GM12878 (cell line): ENCODE measurements at regions of chr11 and their contacts with region 1.

Region 1: GRCh38 chr11:120511116-120511819 is at the start of gene GRIK4:
- DNase-seq: no peak
- ATAC-seq: peak; percentile 95
- H3K4me3 ChIP-seq: peak within 1 kb of the TSS; percentile 16; the same call in 1 of the 2 replicates
- H3K27ac ChIP-seq: no peak within 1 kb of the TSS
- H3K4me1 ChIP-seq: no peaks in the 10 kb centered on the region; the same call in 1 of the 2 replicates
- H3K27me3 ChIP-seq: no peaks in the 10 kb centered on the region
- CTCF ChIP-seq: peak; percentile 88 to 98 (median 92)
- EP300 ChIP-seq: no peak
- POLR2A ChIP-seq: no peak
- RAD21 ChIP-seq: peak; percentile 99
- polyA plus RNA-seq, gene GRIK4: 0.33 to 0.45 TPM

Region 2: GRCh38 chr11:120363436-120363835 is 147.8 kb before region 1 on chr11:
- CTCF ChIA-PET with region 1: no interaction called
- POLR2A ChIA-PET with region 1: no interaction called
- RAD21 ChIA-PET with region 1: no interaction called
- SMC1A ChIA-PET with region 1: no interaction called
- in situ Hi-C with region 1: no loop called
- intact Hi-C with region 1: no loop called
- DNase-seq: no peak
- ATAC-seq: no peak
- H3K4me3 ChIP-seq: no peak overlapping the region
- H3K27ac ChIP-seq: no peak overlapping the region
- H3K4me1 ChIP-seq: no peaks in the 10 kb centered on the region
- H3K27me3 ChIP-seq: no peaks in the 10 kb centered on the region
- CTCF ChIP-seq: no peak
- EP300 ChIP-seq: no peak
- POLR2A ChIP-seq: no peak
- RAD21 ChIP-seq: no peak

Region 3: GRCh38 chr11:120500414-120501071 is 10.7 kb before region 1 on chr11:
- CTCF ChIA-PET with region 1: interaction called, 16 read pairs
- POLR2A ChIA-PET with region 1: no interaction called
- RAD21 ChIA-PET with region 1: interaction called, 4 read pairs
- SMC1A ChIA-PET with region 1: interaction called, 11 read pairs
- in situ Hi-C with region 1: no loop called
- intact Hi-C with region 1: no loop called
- DNase-seq: no peak
- ATAC-seq: peak; percentile 61
- H3K4me3 ChIP-seq: no peak overlapping the region
- H3K27ac ChIP-seq: peak overlapping the region; percentile 24; the same call in 1 of the 2 replicates
- H3K4me1 ChIP-seq: peaks cover 20% of the 10 kb centered on the region
- H3K27me3 ChIP-seq: no peaks in the 10 kb centered on the region; a peak in 1 of 4 replicates
- CTCF ChIP-seq: no peak
- EP300 ChIP-seq: no peak
- POLR2A ChIP-seq: no peak
- RAD21 ChIP-seq: no peak

Region 4: DNA sequence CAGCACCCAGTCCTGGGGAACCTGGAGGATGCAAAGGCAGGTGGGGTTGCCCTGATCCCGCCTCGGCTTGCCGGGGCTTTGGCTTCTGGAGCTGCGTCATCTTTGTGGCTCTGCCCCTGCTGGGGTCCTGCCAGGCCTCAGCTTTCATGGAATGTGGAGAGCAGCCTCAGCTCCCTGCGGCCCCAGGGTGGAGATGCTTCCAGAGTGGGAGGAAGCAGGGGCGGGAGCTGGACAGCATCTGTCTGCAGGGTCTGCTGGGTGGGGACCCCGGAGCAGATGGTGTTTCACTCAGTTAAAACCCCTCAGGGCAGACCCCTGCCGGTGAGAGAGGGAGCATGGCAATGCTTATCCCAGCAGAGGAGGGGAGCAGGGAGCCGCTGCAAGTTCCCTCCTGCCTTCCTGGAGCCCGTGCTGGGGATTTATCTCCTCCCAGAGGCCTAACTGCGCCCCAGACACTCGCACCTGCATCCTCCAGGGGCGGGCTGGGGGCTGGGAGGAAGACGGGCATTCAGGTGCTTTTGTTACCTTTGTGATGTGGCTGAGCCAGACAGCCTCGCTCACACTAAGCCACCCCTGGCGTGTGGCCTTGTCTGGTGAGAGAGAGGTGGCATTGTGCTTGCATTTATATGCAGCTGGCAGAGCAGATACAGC is 16.0 kb after region 1 on chr11:
- CTCF ChIA-PET with region 1: no interaction called
- POLR2A ChIA-PET with region 1: no interaction called
- RAD21 ChIA-PET with region 1: no interaction called
- SMC1A ChIA-PET with region 1: no interaction called
- in situ Hi-C with region 1: no loop called
- intact Hi-C with region 1: no loop called
- DNase-seq: no peak
- ATAC-seq: no peak
- H3K4me3 ChIP-seq: no peak overlapping the region
- H3K27ac ChIP-seq: no peak overlapping the region
- H3K4me1 ChIP-seq: no peaks in the 10 kb centered on the region
- H3K27me3 ChIP-seq: peaks cover 0 to 1% of the 10 kb centered on the region in 2 experiments; a peak in 2 of 4 replicates
- CTCF ChIP-seq: no peak
- EP300 ChIP-seq: no peak
- POLR2A ChIP-seq: no peak
- RAD21 ChIP-seq: no peak

Region 5: DNA sequence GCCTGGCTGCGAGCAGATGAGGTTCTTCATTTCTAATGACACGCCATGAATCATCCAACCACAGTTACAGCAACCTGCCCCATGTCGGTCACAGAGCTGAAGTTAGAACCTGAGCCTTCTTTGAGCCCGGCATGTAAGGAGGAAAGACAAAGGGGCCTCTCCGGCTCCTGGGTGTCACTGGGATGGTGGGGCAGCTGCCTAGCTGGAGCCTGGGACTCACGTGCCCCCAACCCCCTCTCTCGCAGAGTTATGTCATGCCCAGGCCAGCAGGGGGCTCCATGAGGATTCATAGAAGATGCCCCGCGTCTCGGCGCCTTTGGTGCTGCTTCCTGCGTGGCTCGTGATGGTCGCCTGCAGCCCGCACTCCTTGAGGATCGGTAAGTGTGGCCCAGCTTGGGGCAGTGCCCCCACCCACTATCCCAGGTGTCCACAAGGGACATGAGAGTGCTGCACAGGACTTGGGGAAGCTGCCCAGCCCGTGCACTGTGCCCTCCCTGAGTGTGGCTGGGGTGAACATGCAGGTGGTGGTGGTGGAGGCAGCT is 148.8 kb after region 1 on chr11:
- CTCF ChIA-PET with region 1: interaction called, 3 read pairs
- POLR2A ChIA-PET with region 1: no interaction called
- RAD21 ChIA-PET with region 1: interaction called, 4 read pairs
- SMC1A ChIA-PET with region 1: interaction called, 3 read pairs
- in situ Hi-C with region 1: no loop called
- intact Hi-C with region 1: loop called (anchors 1 kb)
- DNase-seq: no peak
- ATAC-seq: peak; percentile 24
- H3K4me3 ChIP-seq: no peak overlapping the region
- H3K27ac ChIP-seq: no peak overlapping the region
- H3K4me1 ChIP-seq: peaks cover 35% of the 10 kb centered on the region
- H3K27me3 ChIP-seq: no peaks in the 10 kb centered on the region; a peak in 1 of 4 replicates
- CTCF ChIP-seq: peak; percentile 52 to 79 (median 72)
- EP300 ChIP-seq: no peak
- POLR2A ChIP-seq: no peak
- RAD21 ChIP-seq: peak; percentile 53

Region 6: GRCh38 chr11:120710354-120711131 is 199.3 kb after region 1 on chr11:
- CTCF ChIA-PET with region 1: interaction called, 4 read pairs
- POLR2A ChIA-PET with region 1: no interaction called
- RAD21 ChIA-PET with region 1: no interaction called
- SMC1A ChIA-PET with region 1: no interaction called
- in situ Hi-C with region 1: no loop called
- intact Hi-C with region 1: loop called (anchors 1 kb)
- DNase-seq: no peak
- ATAC-seq: peak; percentile 45
- H3K4me3 ChIP-seq: peak overlapping the region; percentile 12; the same call in 1 of the 2 replicates
- H3K27ac ChIP-seq: peak overlapping the region; percentile 63
- H3K4me1 ChIP-seq: peaks cover 47% of the 10 kb centered on the region
- H3K27me3 ChIP-seq: no peaks in the 10 kb centered on the region
- CTCF ChIP-seq: no peak
- EP300 ChIP-seq: no peak
- POLR2A ChIP-seq: no peak
- RAD21 ChIP-seq: no peak

Region 7: DNA sequence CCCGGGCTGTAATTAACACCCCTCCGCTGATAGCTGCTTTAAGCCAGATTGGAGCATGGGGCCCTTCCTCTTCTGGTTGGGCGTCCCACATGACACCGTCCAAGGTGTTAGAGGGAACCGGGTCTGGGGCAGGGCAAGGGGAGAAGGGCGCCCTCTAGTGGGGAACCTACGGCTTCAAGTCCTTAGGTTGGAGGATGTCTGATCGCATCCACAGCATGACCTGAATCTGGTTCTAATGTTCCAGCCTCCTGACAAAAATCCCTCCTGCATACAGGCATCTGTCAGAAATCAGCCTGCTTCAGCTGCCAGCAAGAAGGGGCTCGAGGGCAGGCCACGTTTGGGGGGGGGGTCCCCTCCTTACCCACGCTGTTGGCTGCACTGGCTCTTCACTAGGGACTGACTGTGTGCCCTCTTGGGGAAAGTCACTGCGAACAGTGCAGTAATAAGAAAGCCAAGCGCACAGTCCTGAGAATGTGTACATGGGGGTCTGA is 418.4 kb after region 1 on chr11:
- CTCF ChIA-PET with region 1: interaction called, 16 read pairs
- POLR2A ChIA-PET with region 1: no interaction called
- RAD21 ChIA-PET with region 1: interaction called, 6 read pairs
- SMC1A ChIA-PET with region 1: interaction called, 4 read pairs
- in situ Hi-C with region 1: no loop called
- intact Hi-C with region 1: loop called (anchors 1 kb)
- DNase-seq: no peak
- ATAC-seq: peak; percentile 83
- H3K4me3 ChIP-seq: no peak overlapping the region
- H3K27ac ChIP-seq: no peak overlapping the region
- H3K4me1 ChIP-seq: peaks cover 18% of the 10 kb centered on the region
- H3K27me3 ChIP-seq: no peaks in the 10 kb centered on the region
- CTCF ChIP-seq: peak; percentile 72 to 89 (median 81)
- EP300 ChIP-seq: no peak
- POLR2A ChIP-seq: no peak
- RAD21 ChIP-seq: peak; percentile 58

Region 8: DNA sequence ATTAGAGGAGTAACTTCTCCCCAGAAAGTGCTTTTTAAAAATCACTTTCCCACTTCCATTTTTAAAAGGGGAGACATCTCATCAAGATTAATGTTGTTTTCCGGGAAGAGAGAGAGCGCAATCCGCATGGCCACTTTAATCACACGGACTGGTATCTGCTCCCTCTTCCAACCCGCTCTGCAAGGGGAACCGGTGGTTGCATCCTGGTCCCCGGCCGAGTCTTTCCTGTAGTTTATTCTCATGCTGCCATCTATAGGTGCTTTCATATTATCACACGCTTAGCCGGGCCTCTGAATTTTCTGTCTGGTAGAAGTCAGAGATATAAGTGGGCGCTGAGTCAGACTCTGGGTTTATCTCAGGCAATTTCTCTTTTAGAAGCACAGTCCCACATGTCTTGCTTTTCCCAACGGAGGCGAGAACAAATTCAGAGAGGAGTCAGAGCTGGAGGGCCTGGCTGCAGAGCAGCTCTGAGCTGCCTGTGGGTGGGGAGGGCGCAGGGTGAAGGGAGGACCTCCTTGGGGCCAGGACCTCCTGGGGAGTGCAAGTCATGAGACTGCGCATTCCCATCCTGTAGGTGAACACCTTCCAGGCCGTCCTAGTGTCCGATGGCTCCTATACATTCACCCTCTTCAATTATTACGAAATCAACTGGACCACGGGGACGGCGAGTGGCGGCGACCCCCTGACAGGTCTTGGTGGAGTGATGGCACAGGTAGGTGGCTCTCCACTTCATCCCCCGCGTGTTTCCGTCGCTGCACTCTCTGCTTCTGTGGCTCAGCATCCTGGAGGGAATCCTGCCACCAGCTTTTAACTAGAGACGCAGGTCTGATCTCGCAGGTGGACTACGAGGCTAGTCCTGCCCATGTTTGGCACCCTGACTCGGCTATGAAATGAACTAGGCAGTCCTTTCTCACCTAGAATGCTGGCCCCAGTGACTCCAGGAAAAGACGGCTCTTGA is 601.5 kb after region 1 on chr11:
- CTCF ChIA-PET with region 1: interaction called, 3 read pairs
- POLR2A ChIA-PET with region 1: no interaction called
- RAD21 ChIA-PET with region 1: no interaction called
- SMC1A ChIA-PET with region 1: no interaction called
- in situ Hi-C with region 1: no loop called
- intact Hi-C with region 1: loop called (anchors 5 kb)
- DNase-seq: no peak
- ATAC-seq: peak; percentile 95
- H3K4me3 ChIP-seq: no peak overlapping the region
- H3K27ac ChIP-seq: no peak overlapping the region
- H3K4me1 ChIP-seq: no peaks in the 10 kb centered on the region
- H3K27me3 ChIP-seq: peaks cover 0 to 12% of the 10 kb centered on the region in 2 experiments; a peak in 3 of 4 replicates
- CTCF ChIP-seq: peak; percentile 56 to 83 (median 66)
- EP300 ChIP-seq: no peak
- POLR2A ChIP-seq: no peak
- RAD21 ChIP-seq: peak; percentile 82

Region 9: DNA sequence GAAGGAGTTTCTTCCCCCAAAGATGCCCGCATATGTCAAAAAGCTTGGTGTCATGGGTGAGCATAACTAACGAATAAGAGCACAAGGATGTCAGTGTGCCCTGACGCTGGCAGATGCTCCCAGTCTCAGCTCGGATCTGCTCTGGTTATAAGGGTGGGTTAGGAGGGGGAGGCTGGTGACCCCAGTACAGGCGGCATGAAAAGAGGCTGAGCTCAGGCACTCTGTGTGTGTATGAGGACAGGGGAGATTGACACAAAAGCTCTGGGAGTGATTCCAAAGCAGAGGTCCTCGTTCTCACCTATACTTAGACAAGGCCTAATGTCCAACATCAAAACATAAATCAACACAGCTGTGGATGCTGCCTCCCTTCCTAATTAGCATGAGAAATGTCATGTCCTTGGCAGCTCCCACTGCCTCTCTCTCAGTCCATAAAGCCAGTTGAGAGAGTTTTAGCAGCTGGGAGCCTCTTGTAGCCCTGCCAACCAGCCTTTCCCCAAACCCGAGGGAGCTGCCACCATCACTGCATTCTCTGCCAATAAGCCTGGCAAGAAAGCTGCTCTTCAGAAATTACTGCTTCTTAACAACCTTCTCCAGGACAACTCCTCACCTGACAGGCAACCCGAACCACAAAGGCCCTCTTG is 841.1 kb after region 1 on chr11:
- CTCF ChIA-PET with region 1: no interaction called
- POLR2A ChIA-PET with region 1: no interaction called
- RAD21 ChIA-PET with region 1: no interaction called
- SMC1A ChIA-PET with region 1: no interaction called
- in situ Hi-C with region 1: no loop called
- intact Hi-C with region 1: no loop called
- DNase-seq: no peak
- ATAC-seq: no peak
- H3K4me3 ChIP-seq: no peak overlapping the region
- H3K27ac ChIP-seq: no peak overlapping the region
- H3K4me1 ChIP-seq: peaks cover 3% of the 10 kb centered on the region
- H3K27me3 ChIP-seq: no peaks in the 10 kb centered on the region; a peak in 1 of 4 replicates
- CTCF ChIP-seq: no peak
- EP300 ChIP-seq: no peak
- POLR2A ChIP-seq: no peak
- RAD21 ChIP-seq: no peak